B cell (primary cell): ENCODE measurements at regions of chr10 and their contacts with region 1.

Region 1: DNA sequence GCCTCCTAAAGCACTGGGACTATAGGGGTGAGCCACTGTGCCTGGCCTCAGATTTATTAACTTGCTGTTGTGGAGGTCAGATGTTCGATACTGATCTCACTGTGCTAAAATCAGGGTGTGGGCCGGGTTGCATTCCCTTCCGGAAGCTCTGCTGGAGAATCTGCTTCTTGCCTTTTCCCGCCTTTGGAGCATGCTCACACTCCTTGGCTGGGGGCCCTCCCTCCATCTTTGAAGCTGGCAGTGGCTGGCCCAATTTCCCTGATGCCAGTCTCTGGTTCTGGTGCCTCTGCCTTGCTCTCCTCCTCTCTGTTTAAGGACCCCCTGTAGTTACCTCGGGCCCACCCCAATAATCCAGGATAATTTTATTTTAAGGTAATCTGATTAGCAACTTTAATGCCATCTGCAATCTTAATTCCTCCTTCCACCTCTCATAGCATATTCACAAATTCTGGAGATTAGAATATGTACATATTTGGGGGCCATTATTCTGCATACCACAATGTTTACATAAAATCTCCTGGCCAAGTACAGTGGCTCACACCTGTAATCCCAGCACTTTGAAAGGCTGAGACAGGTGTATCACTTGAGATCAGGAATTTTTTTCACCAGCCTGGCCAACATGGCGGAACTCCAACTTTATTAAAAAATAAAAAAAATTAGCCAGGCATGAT is 7.9 kb upstream of the PITRM1 start:
- DNase-seq: no peak
- ATAC-seq: no peak
- H3K4me3 ChIP-seq: no peak overlapping the region
- H3K4me3 Mint-ChIP-seq: no peak overlapping the region
- H3K27ac ChIP-seq: no peak overlapping the region
- H3K27ac Mint-ChIP-seq: no peak overlapping the region
- H3K4me1 ChIP-seq: peaks cover 9 to 11% of the 10 kb centered on the region in 2 donors
- H3K4me1 Mint-ChIP-seq: peaks cover 11% of the 10 kb centered on the region
- H3K27me3 ChIP-seq: peaks cover 0 to 7% (median 3%) of the 10 kb centered on the region in 4 experiments
- H3K27me3 Mint-ChIP-seq: peaks cover 14% of the 10 kb centered on the region
- CTCF ChIP-seq: no peak

Region 2: GRCh38 chr10:3197348-3198003 is 17.0 kb after region 1 on chr10:
- CTCF ChIA-PET with region 1: interaction called, 27 read pairs
- POLR2A ChIA-PET with region 1: no interaction called
- intact Hi-C with region 1: no loop called
- DNase-seq: peak; percentile 41
- ATAC-seq: peak; percentile 36
- H3K4me3 ChIP-seq: no peak overlapping the region
- H3K4me3 Mint-ChIP-seq: peak overlapping the region; percentile 2
- H3K27ac ChIP-seq: no peak overlapping the region
- H3K27ac Mint-ChIP-seq: no peak overlapping the region
- H3K4me1 ChIP-seq: peaks cover 7% of the 10 kb centered on the region in 2 donors
- H3K4me1 Mint-ChIP-seq: peaks cover 10% of the 10 kb centered on the region
- H3K27me3 ChIP-seq: peaks cover 0 to 51% (median 10%) of the 10 kb centered on the region in 4 experiments
- H3K27me3 Mint-ChIP-seq: peaks cover 48% of the 10 kb centered on the region
- CTCF ChIP-seq: peak; percentile 51